Activated naive CD4-positive, alpha-beta T cell treated with anti-CD3 and anti-CD28 coated beads, Interleukin-2, amount 10 ng/mL, durations not matched to agents 7 days and 5 days (primary cell): ENCODE measurements at regions of chr7 and their contacts with region 1.

Region 1: GRCh38 chr7:102279537-102280400 is 6.9 kb upstream of the SH2B2 start:
- DNase-seq: peak; percentile 71
- H3K4me3 Mint-ChIP-seq: no peak overlapping the region
- H3K27ac Mint-ChIP-seq: no peak overlapping the region
- H3K4me1 Mint-ChIP-seq: peaks cover 9% of the 10 kb centered on the region
- H3K27me3 Mint-ChIP-seq: peaks cover 21% of the 10 kb centered on the region

Region 2: DNA sequence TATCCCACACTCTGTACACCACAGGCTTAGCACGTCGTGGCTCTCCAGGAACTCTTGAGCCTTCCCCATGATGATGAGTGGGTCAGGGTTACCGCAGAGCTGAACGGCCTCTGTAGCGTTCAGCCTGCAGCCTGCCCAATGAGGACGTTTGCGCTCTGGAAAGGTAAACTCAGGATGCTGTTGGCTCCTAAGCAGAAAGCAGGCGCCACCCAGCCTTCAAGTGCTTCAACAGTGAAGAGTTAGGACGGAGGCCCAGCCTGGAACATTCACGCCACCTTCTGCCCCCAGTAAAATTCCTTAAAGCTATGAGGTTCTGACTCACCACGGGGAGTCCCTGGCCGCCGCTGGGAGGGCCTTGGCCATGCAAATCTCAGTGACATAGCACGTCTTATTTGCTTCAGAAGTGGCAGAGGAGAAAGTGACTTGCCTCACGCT is 154.6 kb before region 1 on chr7:
- CTCF ChIA-PET with region 1: no interaction called
- DNase-seq: no peak
- H3K4me3 Mint-ChIP-seq: no peak overlapping the region
- H3K27ac Mint-ChIP-seq: no peak overlapping the region
- H3K4me1 Mint-ChIP-seq: peaks cover 13% of the 10 kb centered on the region
- H3K27me3 Mint-ChIP-seq: no peaks in the 10 kb centered on the region

Region 3: GRCh38 chr7:102264367-102264891 is 15.3 kb before region 1 on chr7:
- CTCF ChIA-PET with region 1: no interaction called
- DNase-seq: no peak
- H3K4me3 Mint-ChIP-seq: no peak overlapping the region
- H3K27ac Mint-ChIP-seq: no peak overlapping the region
- H3K4me1 Mint-ChIP-seq: no peaks in the 10 kb centered on the region
- H3K27me3 Mint-ChIP-seq: no peaks in the 10 kb centered on the region

Region 4: DNA sequence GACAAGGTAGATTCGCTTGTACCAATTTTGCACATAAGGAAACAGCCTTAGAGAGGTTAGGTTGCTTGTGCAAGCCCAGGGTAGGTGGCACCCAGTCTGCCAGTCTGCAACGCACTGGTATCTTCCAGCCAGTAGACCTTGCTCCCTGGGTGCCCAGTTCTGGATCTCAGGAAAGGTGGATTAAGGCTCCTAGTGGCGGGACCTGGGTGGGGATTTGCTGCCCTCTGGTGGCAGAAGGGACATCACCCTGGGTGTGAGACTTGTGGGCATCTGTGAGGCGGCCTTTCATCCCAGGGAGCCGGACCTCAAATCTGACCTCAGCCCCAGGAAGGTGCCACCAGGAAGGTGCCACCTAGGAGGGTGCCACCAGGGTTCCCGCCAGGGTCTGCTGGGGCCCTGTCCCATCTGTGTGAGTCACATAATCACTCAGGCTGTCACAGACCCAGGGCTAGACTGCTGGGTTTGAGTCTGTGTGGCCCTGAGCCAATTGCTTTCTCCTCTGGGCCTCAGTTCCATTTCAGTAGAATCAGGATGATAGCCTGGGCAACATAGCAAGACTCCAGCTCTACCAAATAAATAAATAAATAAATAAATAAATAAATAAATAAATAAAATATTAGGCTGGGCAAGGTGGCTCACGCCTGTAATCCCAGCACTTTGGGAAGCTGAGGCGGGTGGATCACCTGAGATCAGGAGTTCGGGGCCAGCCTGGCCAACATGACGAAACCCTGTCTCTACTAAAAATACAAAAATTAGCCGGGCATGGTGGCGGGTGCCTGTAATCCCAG is 111.1 kb after region 1 on chr7:
- CTCF ChIA-PET with region 1: interaction called, 78 read pairs
- DNase-seq: peak; percentile 79
- H3K4me3 Mint-ChIP-seq: no peak overlapping the region
- H3K27ac Mint-ChIP-seq: no peak overlapping the region
- H3K4me1 Mint-ChIP-seq: peaks cover 6% of the 10 kb centered on the region
- H3K27me3 Mint-ChIP-seq: no peaks in the 10 kb centered on the region